MCF 10A (cell line): ENCODE measurements at regions of chrX and their contacts with region 1.

Region 1: DNA sequence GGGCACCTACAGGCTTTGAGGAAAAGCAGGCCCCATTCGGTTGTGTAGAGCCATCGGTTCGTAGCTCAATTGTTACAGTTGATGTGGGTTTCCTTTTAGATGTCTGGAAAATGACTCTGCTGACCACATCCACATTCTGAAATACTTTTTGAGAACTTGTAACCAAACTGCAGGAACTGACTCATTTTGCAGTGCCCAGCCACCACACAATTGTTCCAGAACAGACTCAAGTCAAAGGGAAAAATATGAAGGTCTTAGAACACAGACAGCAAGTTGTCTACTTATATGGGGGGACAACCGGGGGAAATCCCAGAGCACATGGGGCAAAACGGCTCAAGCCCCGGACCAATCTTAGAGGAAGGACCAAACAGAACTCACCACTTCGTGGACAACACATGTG is 557.6 kb upstream of the DIPK2B start:
- DNase-seq: peak; percentile 68
- H3K4me3 Mint-ChIP-seq: peak overlapping the region; percentile 45
- H3K27ac Mint-ChIP-seq: peak overlapping the region; percentile 77
- H3K4me1 Mint-ChIP-seq: peaks cover 35% of the 10 kb centered on the region
- H3K27me3 Mint-ChIP-seq: peaks cover 25% of the 10 kb centered on the region
- CTCF ChIP-seq: no peak

Region 2: DNA sequence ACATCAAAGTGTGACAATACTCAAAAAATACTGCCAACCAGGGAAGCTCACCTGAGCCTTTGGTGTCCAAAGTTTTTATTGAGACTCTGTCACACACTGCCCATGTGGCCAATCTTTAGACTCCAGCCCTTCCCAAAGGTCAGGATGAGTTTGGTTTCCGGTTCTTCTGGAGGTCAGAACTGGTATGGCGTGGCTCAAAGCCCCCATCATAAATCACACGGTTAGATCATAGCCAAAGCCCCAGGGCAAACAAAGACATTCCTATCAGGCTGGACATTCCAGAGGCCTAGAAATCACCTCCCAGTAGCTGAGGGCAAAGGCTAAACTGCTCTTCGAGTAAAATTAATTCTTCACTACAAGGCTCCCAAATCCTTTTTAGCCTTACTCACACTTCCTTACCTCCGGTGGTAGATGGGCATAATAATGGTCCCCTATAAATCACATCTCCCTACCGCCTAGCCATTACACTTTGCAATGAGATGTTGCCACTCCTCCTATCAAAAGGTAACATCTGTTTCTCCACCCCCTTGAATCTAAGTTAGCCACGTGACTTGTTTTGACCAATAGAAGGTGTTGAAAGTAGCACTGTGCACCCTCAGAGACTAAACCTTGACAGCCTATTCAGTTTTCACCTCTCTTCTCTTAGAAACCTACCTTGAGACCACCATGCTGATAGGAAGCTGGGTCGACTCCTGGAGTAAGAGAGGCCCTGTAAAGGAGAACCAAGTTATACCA is 1052.3 kb before region 1 on chrX:
- CTCF ChIA-PET with region 1: no interaction called
- POLR2A ChIA-PET with region 1: no interaction called
- intact Hi-C with region 1: no loop called
- DNase-seq: no peak
- H3K4me3 Mint-ChIP-seq: no peak overlapping the region
- H3K27ac Mint-ChIP-seq: no peak overlapping the region
- H3K4me1 Mint-ChIP-seq: no peaks in the 10 kb centered on the region
- H3K27me3 Mint-ChIP-seq: no peaks in the 10 kb centered on the region
- CTCF ChIP-seq: no peak

Region 3: DNA sequence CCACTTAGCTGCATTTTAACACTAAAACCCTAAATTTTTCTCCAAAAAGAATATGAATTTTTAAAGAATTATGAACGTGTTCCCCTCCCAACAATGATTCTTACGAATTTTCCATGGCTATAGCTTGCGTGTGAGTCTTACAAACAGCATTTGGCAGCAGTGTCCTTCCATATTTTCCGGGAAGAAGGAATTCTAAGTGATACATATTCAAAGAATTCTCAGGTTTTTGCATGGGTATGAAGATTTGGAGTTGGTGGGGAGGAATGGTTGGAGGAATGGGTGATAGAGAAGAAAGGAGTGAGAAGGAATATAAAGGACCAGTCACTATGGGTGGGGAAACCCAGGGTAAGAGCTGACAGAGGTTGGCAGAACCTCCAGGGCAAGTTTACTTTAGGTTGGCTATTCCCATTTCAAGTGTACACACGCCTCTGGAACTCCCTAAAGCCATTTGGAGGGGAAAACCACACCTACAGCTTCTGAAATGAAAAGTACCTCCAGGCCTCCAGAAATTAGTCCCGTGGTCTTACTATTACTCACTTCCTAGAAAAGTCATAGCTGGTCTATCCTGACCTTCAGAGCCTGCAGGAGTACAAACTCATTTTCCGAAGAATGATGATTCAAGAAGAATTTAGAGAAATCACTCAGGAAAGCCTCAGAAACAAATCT is 136.8 kb before region 1 on chrX:
- CTCF ChIA-PET with region 1: no interaction called
- POLR2A ChIA-PET with region 1: interaction called, 11 read pairs
- intact Hi-C with region 1: no loop called
- DNase-seq: peak; percentile 65
- H3K4me3 Mint-ChIP-seq: no peak overlapping the region
- H3K27ac Mint-ChIP-seq: peak overlapping the region; percentile 86
- H3K4me1 Mint-ChIP-seq: peaks cover 18% of the 10 kb centered on the region
- H3K27me3 Mint-ChIP-seq: peaks cover 28% of the 10 kb centered on the region
- CTCF ChIP-seq: no peak

Region 4: GRCh38 chrX:45710081-45710801 is 48.1 kb before region 1 on chrX:
- CTCF ChIA-PET with region 1: no interaction called
- POLR2A ChIA-PET with region 1: no interaction called
- intact Hi-C with region 1: loop called (anchors 1 kb)
- DNase-seq: peak; percentile 62
- H3K4me3 Mint-ChIP-seq: no peak overlapping the region
- H3K27ac Mint-ChIP-seq: peak overlapping the region; percentile 84
- H3K4me1 Mint-ChIP-seq: peaks cover 18% of the 10 kb centered on the region
- H3K27me3 Mint-ChIP-seq: peaks cover 17% of the 10 kb centered on the region
- CTCF ChIP-seq: no peak

Region 5: GRCh38 chrX:45935408-45935807 is 177.1 kb after region 1 on chrX:
- CTCF ChIA-PET with region 1: no interaction called
- POLR2A ChIA-PET with region 1: no interaction called
- intact Hi-C with region 1: no loop called
- DNase-seq: no peak
- H3K4me3 Mint-ChIP-seq: no peak overlapping the region
- H3K27ac Mint-ChIP-seq: no peak overlapping the region
- H3K4me1 Mint-ChIP-seq: no peaks in the 10 kb centered on the region
- H3K27me3 Mint-ChIP-seq: peaks cover 4% of the 10 kb centered on the region
- CTCF ChIP-seq: no peak

Region 6: GRCh38 chrX:47078129-47079043 is 1320.1 kb after region 1 on chrX and contains the start of gene RGN:
- CTCF ChIA-PET with region 1: no interaction called
- POLR2A ChIA-PET with region 1: no interaction called
- intact Hi-C with region 1: no loop called
- DNase-seq: no peak
- H3K4me3 Mint-ChIP-seq: no peak within 1 kb of the TSS
- H3K27ac Mint-ChIP-seq: no peak within 1 kb of the TSS
- H3K4me1 Mint-ChIP-seq: no peaks in the 10 kb centered on the region
- H3K27me3 Mint-ChIP-seq: peaks cover 32% of the 10 kb centered on the region
- CTCF ChIP-seq: no peak
- total RNA-seq, gene RGN: not detected in 2 replicates